Activated B cell treated with CpG ODN at 0.5 μM for 24 hours (primary cell): ENCODE measurements at regions of chr19 and their contacts with region 1.

Region 1: DNA sequence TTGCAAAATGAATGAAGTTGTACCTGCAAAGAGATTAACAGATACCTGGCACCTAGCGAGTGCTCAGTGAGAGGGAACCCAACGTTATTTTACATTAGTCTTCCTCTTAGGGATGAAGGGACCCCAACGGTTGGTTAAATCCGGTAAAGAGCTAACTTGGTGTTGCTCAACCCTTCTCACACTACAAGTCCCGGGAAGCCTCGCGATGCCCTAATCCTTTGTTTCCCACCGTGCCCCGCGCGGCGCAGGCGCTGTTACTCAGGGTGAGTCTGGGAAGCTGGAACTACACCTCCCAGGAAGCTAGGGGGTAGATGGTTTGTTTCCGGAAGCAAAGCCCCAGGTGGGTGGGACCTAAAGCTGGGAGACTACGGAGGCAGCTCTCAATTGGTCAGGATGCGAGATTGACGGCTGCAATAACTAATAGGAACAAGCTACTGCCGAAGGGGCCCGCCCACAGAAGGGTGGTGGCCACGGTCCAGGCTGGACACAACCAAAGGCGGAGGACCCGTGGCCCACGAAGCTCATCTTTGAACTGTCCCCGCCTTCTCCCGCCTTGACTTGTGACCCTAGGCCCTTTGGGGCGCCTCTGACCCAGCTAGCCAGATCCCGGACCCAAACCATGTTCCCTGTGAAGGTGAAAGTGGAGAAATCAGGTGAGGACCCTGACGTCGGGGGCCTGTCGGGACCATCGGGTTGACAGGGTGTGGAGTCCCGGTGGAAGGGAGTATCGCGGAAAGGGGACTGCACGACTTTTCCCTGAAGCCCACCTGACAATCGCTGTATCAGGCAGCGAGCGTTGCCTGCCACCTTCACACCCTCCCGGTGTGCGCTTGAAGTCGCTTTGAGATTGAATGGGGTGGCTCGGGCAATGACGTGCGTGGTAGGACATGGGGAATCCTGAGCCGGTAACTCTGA is at the start of gene LIN37:
- DNase-seq: peak; percentile 91
- ATAC-seq: peak; percentile 73
- H3K4me3 Mint-ChIP-seq: peak within 1 kb of the TSS; percentile 98
- H3K27ac Mint-ChIP-seq: peak within 1 kb of the TSS; percentile 96
- H3K4me1 Mint-ChIP-seq: peaks cover 48% of the 10 kb centered on the region
- H3K27me3 Mint-ChIP-seq: no peaks in the 10 kb centered on the region
- CTCF ChIP-seq: no peak
- total RNA-seq, gene LIN37: 12.2 and 14.3 TPM in 2 replicates

Region 2: DNA sequence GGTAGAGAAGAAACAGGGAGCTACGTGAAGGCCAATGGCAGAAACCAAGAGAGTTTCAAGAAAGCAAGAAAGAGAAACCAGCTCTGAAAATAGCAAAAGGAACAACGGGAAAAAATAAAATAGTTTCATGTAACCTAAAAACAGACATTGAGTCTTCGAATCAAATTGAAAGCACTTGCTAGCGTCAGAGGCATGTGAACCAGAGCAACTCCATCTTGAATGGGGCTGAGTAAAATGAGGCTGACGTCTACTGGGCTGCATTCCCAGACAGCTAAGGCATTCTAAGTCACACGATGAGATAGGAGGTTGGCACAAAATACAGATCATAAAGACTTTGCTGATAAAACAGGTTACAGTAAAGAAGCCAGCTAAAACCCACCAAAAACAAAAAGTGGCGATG is 169.7 kb before region 1 on chr19:
- CTCF ChIA-PET with region 1: no interaction called
- POLR2A ChIA-PET with region 1: no interaction called
- intact Hi-C with region 1: no loop called
- DNase-seq: no peak
- ATAC-seq: no peak
- H3K4me3 Mint-ChIP-seq: no peak overlapping the region
- H3K27ac Mint-ChIP-seq: no peak overlapping the region
- H3K4me1 Mint-ChIP-seq: no peaks in the 10 kb centered on the region
- H3K27me3 Mint-ChIP-seq: peaks cover 12% of the 10 kb centered on the region
- CTCF ChIP-seq: no peak

Region 3: GRCh38 chr19:35693830-35694599 is 54.3 kb before region 1 on chr19:
- CTCF ChIA-PET with region 1: interaction called, 4 read pairs
- POLR2A ChIA-PET with region 1: interaction called, 3 read pairs
- intact Hi-C with region 1: loop called (anchors 2 kb)
- DNase-seq: peak; percentile 76
- ATAC-seq: peak; percentile 100
- H3K4me3 Mint-ChIP-seq: no peak overlapping the region
- H3K27ac Mint-ChIP-seq: no peak overlapping the region
- H3K4me1 Mint-ChIP-seq: peaks cover 3% of the 10 kb centered on the region
- H3K27me3 Mint-ChIP-seq: peaks cover 4% of the 10 kb centered on the region
- CTCF ChIP-seq: no peak

Region 4: DNA sequence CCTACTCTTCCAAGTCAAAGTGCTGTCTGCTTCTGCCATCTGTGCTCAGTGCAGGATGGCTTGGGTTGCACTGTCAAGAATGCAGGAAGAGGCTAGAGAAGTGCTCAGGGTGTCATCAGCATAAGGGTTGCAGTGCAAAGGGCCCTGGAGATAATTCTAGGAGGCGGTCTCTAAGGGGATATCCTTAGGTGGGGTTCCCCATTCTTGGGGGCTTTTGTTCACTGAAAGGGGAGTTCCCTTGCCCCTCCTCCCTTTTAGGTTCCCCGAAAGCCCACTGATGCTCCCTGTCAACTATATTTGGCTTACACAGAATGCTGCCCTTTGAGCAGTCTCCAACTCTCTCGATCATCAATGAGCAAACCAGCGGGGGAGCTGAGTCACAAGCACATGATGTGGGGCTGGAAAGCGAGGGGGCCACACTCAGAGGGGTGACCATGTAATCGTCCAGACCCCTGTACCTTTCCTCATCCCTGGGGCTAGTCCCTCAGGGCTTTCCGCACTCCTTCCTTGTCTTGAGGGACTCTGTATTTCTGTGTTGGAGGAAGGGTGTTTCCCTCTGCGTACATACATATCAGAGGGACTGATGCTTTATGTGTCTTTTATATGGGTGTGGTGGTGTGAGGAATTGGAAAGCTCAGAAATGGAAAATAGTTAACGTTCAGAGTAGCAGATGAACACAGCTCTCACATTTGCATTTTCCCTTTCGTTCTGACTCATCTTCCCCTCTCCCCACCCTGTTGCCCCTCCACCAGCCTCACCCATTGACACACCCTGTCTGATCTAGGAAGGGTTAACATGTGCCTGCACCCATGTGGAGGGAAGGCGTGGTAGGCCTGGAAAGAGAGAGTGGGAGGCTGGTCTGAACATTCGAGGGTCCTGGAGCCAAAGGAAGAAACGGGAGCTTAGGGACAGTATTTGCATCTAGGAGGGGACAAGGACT is 37.3 kb before region 1 on chr19:
- CTCF ChIA-PET with region 1: no interaction called
- POLR2A ChIA-PET with region 1: interaction called, 29 read pairs
- intact Hi-C with region 1: loop called (anchors 2 kb)
- DNase-seq: peak; percentile 53
- ATAC-seq: peak; percentile 56
- H3K4me3 Mint-ChIP-seq: peak overlapping the region; percentile 62
- H3K27ac Mint-ChIP-seq: peak overlapping the region; percentile 96
- H3K4me1 Mint-ChIP-seq: peaks cover 59% of the 10 kb centered on the region
- H3K27me3 Mint-ChIP-seq: no peaks in the 10 kb centered on the region
- CTCF ChIP-seq: no peak

Region 5: DNA sequence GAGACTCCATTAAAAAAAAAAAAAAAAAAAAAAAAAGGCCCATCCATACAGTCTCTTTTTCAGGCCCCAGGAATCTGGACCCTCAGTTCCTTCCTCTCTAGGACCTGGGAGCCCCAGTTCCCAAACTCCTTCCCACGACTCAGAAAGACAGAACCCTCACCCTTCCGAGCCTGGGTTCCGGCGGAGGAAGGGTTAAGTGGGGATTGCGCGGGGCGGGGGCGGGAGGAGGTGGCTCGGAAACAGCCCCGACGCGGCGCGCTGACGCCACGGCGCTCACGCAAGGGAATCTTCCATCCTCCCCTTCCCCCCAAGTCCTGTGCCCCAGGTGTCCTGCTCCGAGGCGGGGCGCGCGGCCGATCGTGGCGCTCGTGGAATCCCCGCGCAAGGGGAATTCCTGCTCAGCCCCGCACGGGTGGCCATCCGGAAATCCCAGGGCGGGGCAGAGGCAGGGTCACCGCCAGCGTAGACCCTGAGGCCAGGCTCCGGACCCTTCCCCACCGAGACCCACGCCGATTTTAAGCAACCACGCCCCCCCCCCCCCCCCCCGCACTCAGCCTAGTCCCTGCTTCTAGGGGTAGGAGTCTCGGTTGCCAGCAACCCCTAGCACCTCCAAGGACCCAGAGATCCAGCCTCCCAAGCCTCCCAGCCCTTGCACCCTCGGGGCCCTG is 151.3 kb after region 1 on chr19:
- CTCF ChIA-PET with region 1: no interaction called
- POLR2A ChIA-PET with region 1: interaction called, 6 read pairs
- intact Hi-C with region 1: loop called (anchors 1 kb)
- DNase-seq: peak; percentile 93
- ATAC-seq: peak; percentile 57
- H3K4me3 Mint-ChIP-seq: peak overlapping the region; percentile 95
- H3K27ac Mint-ChIP-seq: peak overlapping the region; percentile 95
- H3K4me1 Mint-ChIP-seq: peaks cover 77% of the 10 kb centered on the region
- H3K27me3 Mint-ChIP-seq: no peaks in the 10 kb centered on the region
- CTCF ChIP-seq: no peak